Right cardiac atrium (tissue), 5 donors: ENCODE measurements at regions of chr12 and their contacts with region 1.

Region 1: DNA sequence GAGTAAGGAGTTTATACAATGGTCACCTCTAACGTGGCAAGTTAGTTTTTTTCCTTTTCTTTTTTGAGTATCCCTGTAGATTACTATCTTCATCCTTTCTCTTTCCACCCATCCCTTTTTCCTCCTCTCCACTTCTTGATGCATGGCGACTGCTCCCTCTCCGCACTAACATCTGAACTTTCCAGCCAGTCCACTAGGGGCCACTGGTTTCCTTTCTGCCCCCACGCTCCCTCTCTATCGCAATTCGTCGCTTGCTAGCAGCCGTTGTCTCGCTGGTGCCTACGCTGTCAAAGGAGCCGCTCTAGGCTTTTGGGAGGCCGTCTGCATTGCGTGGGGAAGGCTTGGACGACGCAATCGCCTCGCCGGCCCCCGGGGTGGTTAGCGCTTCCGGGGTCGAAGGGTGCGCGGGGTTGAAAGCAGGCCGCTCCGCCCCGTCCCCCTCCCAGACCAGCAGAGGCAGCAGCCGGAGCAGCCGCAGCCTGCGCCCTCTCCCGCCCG is at the start of gene PCBP2:
- DNase-seq: peak; percentile 98 to 99 (median 99)
- ATAC-seq: peak; percentile 97 to 98
- H3K4me3 ChIP-seq: peak within 1 kb of the TSS; percentile 75
- H3K27ac ChIP-seq: peak within 1 kb of the TSS; percentile 99
- H3K4me1 ChIP-seq: peaks cover 2% of the 10 kb centered on the region
- H3K27me3 ChIP-seq: no peaks in the 10 kb centered on the region
- total RNA-seq, gene PCBP2: 575 to 743 (median 588) TPM

Region 2: DNA sequence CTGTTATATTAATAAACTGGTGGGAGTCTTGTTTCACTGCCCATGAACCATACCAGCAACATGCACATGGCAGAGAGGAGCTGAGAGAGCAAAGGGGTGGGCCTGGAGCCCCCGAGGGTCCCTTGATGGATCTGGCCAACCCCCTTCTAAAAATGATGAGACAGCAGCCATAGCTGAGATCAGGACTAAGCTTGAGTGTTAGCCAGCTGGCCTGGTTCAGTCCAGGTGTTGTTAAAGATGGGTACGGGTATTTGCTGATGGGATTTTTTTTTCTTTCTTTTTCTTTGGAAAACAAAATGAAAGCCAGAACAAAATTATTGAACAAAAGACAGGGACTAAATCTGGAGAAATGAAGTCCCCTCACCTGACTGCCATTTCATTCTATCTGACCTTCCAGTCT is 16.2 kb after region 1 on chr12:
- intact Hi-C with region 1: loop called in 1 of 4 experiments (anchors 2 kb)
- DNase-seq: no peak
- ATAC-seq: no peak
- H3K4me3 ChIP-seq: no peak overlapping the region
- H3K27ac ChIP-seq: no peak overlapping the region
- H3K4me1 ChIP-seq: peaks cover 2% of the 10 kb centered on the region
- H3K27me3 ChIP-seq: no peaks in the 10 kb centered on the region

Region 3: DNA sequence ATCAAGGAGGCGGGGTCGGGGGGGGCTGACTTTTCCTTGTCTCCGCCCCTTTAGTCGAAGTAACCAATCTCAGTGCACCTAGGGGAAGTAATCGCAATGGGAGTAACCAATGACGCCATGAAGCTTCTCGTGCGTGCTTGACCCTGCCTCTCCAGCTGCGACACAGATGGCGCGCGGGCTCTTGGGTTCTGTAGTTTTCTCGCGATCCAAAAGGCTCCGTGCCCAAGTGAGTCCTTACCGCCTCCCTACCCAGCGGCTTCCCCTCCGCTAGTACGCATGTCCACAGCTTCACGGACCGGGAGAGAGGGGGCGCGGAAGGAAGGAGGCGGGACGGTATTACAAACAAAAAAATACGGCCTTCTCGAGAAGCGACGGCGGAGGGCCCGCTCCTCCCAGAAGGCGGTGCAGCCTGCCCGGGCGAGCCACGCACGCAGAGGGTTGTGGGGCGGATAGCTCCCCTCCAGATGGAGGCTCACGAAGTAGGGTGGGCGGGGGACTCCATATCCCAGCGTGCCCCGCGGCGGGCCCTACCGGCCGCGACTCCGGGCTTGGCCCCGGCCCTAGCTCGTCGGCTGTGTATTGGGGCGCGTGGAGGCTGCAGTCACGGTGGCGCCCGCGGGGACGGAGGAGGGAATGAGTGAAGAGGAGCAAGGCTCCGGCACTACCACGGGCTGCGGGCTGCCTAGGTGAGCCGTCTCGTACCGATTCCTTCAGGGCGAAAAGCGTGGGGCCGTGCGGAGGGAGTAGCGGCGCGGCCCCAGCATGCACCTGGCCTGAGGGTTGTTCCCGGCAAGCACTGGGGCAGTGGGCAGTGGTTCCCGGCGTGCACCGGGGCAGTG is 49.3 kb after region 1 on chr12 and contains the start of gene TARBP2:
- intact Hi-C with region 1: loop called in 1 of 4 experiments (anchors 10 kb)
- DNase-seq: peak; percentile 97 to 99 (median 98)
- ATAC-seq: peak; percentile 88 to 89
- H3K4me3 ChIP-seq: peak within 1 kb of the TSS; percentile 78
- H3K27ac ChIP-seq: peak within 1 kb of the TSS; percentile 100
- H3K4me1 ChIP-seq: peaks cover 7% of the 10 kb centered on the region
- H3K27me3 ChIP-seq: no peaks in the 10 kb centered on the region
- total RNA-seq, gene TARBP2: 12.9 to 13.9 (median 13.4) TPM

Region 4: DNA sequence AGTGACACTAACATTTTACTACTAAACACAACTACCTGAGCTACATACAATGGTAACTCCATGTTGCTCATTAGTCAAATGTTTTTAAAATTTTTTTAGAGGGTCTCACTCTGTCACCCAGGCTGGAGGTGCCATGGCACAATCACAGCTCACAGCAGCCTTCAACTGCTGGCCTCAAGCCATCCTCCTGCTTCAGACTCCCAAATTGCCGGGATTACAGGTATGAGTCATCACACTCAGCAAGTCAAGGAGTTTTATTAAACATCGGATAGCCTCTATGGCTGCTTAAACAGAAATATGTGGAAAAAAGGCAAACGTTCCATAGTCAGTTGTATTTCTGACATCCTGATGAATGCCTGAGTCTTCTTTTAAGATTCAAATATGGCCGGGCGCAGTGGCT is 66.7 kb after region 1 on chr12:
- intact Hi-C with region 1: no loop called
- DNase-seq: no peak
- ATAC-seq: no peak
- H3K4me3 ChIP-seq: no peak overlapping the region
- H3K27ac ChIP-seq: no peak overlapping the region
- H3K4me1 ChIP-seq: no peaks in the 10 kb centered on the region
- H3K27me3 ChIP-seq: no peaks in the 10 kb centered on the region

Region 5: GRCh38 chr12:53530920-53531319 is 79.2 kb after region 1 on chr12:
- intact Hi-C with region 1: no loop called
- DNase-seq: no peak
- ATAC-seq: no peak
- H3K4me3 ChIP-seq: no peak overlapping the region
- H3K27ac ChIP-seq: no peak overlapping the region
- H3K4me1 ChIP-seq: peaks cover 3% of the 10 kb centered on the region
- H3K27me3 ChIP-seq: no peaks in the 10 kb centered on the region